ENCODE measurements at regions of chr4 and their contacts with region 1.

Region 1: GRCh38 chr4:17664755-17665154 is 50.3 kb downstream of the MED28 start:
- DNase-seq: no peak
- H3K4me3 ChIP-seq: no peak overlapping the region
- CTCF ChIP-seq: no peak
- POLR2A ChIP-seq: no peak

Region 2: GRCh38 chr4:16617435-16617834 is 1047.3 kb before region 1 on chr4:
- intact Hi-C with region 1: loop called (anchors 10 kb)
- DNase-seq: no peak
- H3K4me3 ChIP-seq: no peak overlapping the region
- CTCF ChIP-seq: no peak
- POLR2A ChIP-seq: no peak

Region 3: DNA sequence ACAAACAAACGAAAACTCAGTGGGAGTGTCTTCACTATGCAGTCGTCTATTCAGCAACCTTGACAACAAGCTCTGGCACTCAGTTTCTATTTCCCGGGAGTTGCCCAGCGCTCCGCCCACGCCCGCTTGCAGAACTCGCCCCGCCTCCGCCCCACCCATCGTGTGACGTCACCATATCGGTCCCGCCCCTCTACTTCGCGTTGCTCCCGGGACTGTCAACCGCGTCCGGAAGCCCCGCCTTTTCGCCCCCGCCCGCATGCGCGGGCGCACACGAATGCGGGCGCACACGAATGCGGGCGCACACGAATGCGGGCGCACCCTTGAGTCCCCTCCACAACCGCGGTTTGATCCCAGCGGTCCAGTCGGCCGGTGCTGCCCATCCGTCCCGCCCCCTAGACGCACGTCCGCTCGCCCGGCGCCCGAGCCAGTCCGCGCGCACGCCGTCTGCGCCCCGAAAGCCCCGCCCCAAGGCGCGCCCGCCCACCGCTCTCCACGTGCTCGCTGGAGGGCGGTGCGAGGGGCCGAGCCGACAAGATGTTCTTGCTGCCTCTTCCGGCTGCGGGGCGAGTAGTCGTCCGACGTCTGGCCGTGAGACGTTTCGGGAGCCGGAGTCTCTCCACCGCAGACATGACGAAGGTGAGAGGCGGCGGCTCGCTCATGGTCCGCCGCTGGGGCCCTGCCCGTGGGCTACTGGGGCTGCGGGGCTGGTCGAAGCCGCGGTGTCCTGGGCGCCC is 87.7 kb before region 1 on chr4 and contains the start of gene LAP3:
- intact Hi-C with region 1: no loop called
- DNase-seq: peak; percentile 97 to 100
- H3K4me3 ChIP-seq: peak within 1 kb of the TSS; percentile 72
- CTCF ChIP-seq: no peak
- POLR2A ChIP-seq: peak in 1 of 2 donors; percentile 26
- total RNA-seq, gene LAP3: 31.9 to 65.6 (median 52.7) TPM

Measured in lower leg skin (tissue), 4 donors.